ENCODE measurements at regions of chr2 and their contacts with region 1.

Region 1: GRCh38 chr2:47152803-47153202 is 2.3 kb downstream of the STPG4 start:
- DNase-seq: no peak
- H3K4me3 Mint-ChIP-seq: no peak overlapping the region
- H3K27ac Mint-ChIP-seq: no peak overlapping the region
- H3K4me1 Mint-ChIP-seq: peaks cover 14% of the 10 kb centered on the region
- H3K27me3 Mint-ChIP-seq: no peaks in the 10 kb centered on the region

Region 2: DNA sequence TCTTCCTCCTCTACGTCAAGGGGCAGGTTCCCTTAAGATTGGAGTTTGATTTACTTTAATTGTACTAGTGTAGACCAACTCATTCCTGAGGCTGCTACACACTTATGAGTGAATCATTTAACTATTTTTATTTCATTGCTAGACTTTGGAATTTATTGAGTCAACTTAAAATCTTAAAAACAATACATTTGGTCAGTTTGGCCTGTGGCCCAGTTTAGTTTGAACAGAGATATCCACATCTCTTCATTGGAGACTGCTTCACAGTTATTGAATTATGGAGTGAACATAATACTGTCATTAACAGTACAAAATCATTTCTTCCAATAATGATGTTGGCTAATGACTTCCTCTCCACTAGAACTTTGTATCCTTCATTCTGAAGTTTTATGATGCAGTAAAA is 36.8 kb after region 1 on chr2:
- intact Hi-C with region 1: no loop called
- DNase-seq: no peak
- H3K4me3 Mint-ChIP-seq: no peak overlapping the region
- H3K27ac Mint-ChIP-seq: no peak overlapping the region
- H3K4me1 Mint-ChIP-seq: no peaks in the 10 kb centered on the region
- H3K27me3 Mint-ChIP-seq: peaks cover 16% of the 10 kb centered on the region

Region 3: GRCh38 chr2:47272031-47272864 is 119.4 kb after region 1 on chr2:
- intact Hi-C with region 1: loop called (anchors 5 kb)
- DNase-seq: peak; percentile 32
- H3K4me3 Mint-ChIP-seq: no peak overlapping the region
- H3K27ac Mint-ChIP-seq: no peak overlapping the region
- H3K4me1 Mint-ChIP-seq: no peaks in the 10 kb centered on the region
- H3K27me3 Mint-ChIP-seq: peaks cover 10% of the 10 kb centered on the region

Measured in activated T-helper 1 cell treated with anti-CD3 and anti-CD28 coated beads, Interleukin-12 subunit alpha, Interleukin-12 subunit beta, Interleukin-2, Interleukin-4 antibody, amounts not matched to agents 30 ng/mL and 10 ng/mL and 1 ng/mL, durations not matched to agents 14 hours and 24 hours and 36 hours (primary cell).